ENCODE measurements at regions of chr2 and their contacts with region 1.

Region 1: GRCh38 chr2:218286570-218287459 is 5.5 kb downstream of the TMBIM1 start:
- DNase-seq: peak; percentile 82
- H3K4me3 Mint-ChIP-seq: peak overlapping the region; percentile 85
- H3K27ac Mint-ChIP-seq: peak overlapping the region; percentile 98
- H3K4me1 Mint-ChIP-seq: peaks cover 69% of the 10 kb centered on the region
- H3K27me3 Mint-ChIP-seq: no peaks in the 10 kb centered on the region

Region 2: GRCh38 chr2:218257390-218257981 is 29.3 kb before region 1 on chr2:
- intact Hi-C with region 1: loop called (anchors 1 kb)
- DNase-seq: peak; percentile 58
- H3K4me3 Mint-ChIP-seq: no peak overlapping the region
- H3K27ac Mint-ChIP-seq: peak overlapping the region; percentile 83
- H3K4me1 Mint-ChIP-seq: peaks cover 15% of the 10 kb centered on the region
- H3K27me3 Mint-ChIP-seq: no peaks in the 10 kb centered on the region

Region 3: DNA sequence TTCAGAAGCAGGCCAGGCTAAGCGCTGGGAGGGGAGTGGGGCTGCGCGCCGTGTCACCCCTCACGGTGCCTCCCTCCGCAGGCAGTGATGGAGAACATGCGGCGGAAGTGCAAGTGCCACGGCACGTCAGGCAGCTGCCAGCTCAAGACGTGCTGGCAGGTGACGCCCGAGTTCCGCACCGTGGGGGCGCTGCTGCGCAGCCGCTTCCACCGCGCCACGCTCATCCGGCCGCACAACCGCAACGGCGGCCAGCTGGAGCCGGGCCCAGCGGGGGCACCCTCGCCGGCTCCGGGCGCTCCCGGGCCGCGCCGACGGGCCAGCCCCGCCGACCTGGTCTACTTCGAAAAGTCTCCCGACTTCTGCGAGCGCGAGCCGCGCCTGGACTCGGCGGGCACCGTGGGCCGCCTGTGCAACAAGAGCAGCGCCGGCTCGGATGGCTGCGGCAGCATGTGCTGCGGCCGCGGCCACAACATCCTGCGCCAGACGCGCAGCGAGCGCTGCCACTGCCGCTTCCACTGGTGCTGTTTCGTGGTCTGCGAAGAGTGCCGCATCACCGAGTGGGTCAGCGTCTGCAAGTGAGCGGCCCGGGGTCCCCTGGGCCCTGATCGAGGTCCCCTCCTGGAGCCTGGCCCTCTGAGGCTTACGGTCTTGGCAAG is 606.0 kb after region 1 on chr2:
- intact Hi-C with region 1: loop called (anchors 10 kb)
- DNase-seq: peak; percentile 77
- H3K4me3 Mint-ChIP-seq: peak overlapping the region; percentile 72
- H3K27ac Mint-ChIP-seq: peak overlapping the region; percentile 69
- H3K4me1 Mint-ChIP-seq: peaks cover 39% of the 10 kb centered on the region
- H3K27me3 Mint-ChIP-seq: peaks cover 25% of the 10 kb centered on the region

Measured in activated T-helper 2 cell treated with anti-CD3 and anti-CD28 coated beads, Interferon-gamma antibody, Interleukin-2, Interleukin-4, amounts not matched to agents 10 μg/mL and 5 μg/mL and 100 μg/mL, durations not matched to agents 14 hours and 24 hours and 36 hours (primary cell).